ENCODE measurements at regions of chr6 and their contacts with region 1.

Region 1: DNA sequence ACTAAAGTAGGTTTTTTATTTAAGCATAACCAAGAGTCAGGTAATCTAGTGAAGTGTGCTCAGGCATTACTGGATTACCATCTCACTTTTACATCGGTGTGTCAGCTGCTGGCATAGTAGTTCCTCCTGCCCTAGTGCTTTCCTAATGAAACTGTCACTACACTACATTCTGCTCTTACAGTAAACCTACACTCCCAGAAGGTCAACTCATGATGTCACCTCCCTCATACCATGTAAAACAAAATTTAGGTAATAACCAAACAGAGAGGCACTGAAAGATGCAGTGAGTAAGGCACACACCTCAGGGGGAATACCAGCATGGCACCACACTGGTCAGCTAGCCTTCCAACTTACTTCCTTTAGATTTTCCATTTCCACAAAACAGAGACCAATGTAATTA is 23.3 kb downstream of the HUS1B start:
- DNase-seq: no peak
- H3K4me3 Mint-ChIP-seq: no peak overlapping the region
- H3K27ac Mint-ChIP-seq: no peak overlapping the region
- H3K4me1 Mint-ChIP-seq: peaks cover 20% of the 10 kb centered on the region
- H3K27me3 Mint-ChIP-seq: no peaks in the 10 kb centered on the region

Region 2: GRCh38 chr6:617445-618100 is 16.0 kb before region 1 on chr6:
- intact Hi-C with region 1: no loop called
- DNase-seq: no peak
- H3K4me3 Mint-ChIP-seq: no peak overlapping the region
- H3K27ac Mint-ChIP-seq: no peak overlapping the region
- H3K4me1 Mint-ChIP-seq: peaks cover 2% of the 10 kb centered on the region
- H3K27me3 Mint-ChIP-seq: no peaks in the 10 kb centered on the region

Region 3: DNA sequence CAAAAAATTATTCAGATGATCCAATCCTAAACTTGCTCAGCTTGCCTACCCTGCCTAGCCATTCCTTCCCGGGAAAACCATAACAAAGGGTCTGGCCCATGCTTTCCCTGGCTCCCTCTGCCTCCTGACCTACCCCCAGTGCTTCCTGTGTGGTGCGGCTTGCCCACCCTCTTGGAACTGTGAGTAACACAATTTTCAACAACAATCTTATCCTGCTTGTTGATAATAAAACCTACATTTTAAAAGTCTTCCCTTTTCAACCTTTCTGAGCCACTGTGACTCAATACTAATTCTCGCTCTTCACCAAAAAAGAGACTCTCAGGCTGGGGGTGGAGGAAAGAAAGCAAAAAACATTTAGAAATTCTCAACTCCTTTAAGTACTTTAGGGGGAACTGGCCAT is 41.3 kb after region 1 on chr6:
- intact Hi-C with region 1: loop called (anchors 5 kb)
- DNase-seq: no peak
- H3K4me3 Mint-ChIP-seq: no peak overlapping the region
- H3K27ac Mint-ChIP-seq: peak overlapping the region; percentile 31
- H3K4me1 Mint-ChIP-seq: peaks cover 9% of the 10 kb centered on the region
- H3K27me3 Mint-ChIP-seq: no peaks in the 10 kb centered on the region